H1 (cell line): ENCODE measurements at regions of chr1 and their contacts with region 1.

Region 1: GRCh38 chr1:19485362-19486187 is at the start of gene CAPZB:
- DNase-seq: peak in 1 of 2 experiments; percentile 90
- H3K4me3 ChIP-seq: peak within 1 kb of the TSS; percentile 83 to 99 (median 94)
- H3K27ac ChIP-seq: peak within 1 kb of the TSS; percentile 92
- H3K4me1 ChIP-seq: peaks cover 19 to 41% (median 29%) of the 10 kb centered on the region in 4 experiments
- H3K27me3 ChIP-seq: no peaks in the 10 kb centered on the region
- CTCF ChIP-seq: no peak
- EP300 ChIP-seq: no peak
- POLR2A ChIP-seq: peak; percentile 79 to 85
- RAD21 ChIP-seq: 0 out of 4 replicates have a peak, but pooled peaks of 1 of the 2 experiments have one; percentile 1
- total RNA-seq, gene CAPZB: 371 TPM in 2 replicates

Region 2: DNA sequence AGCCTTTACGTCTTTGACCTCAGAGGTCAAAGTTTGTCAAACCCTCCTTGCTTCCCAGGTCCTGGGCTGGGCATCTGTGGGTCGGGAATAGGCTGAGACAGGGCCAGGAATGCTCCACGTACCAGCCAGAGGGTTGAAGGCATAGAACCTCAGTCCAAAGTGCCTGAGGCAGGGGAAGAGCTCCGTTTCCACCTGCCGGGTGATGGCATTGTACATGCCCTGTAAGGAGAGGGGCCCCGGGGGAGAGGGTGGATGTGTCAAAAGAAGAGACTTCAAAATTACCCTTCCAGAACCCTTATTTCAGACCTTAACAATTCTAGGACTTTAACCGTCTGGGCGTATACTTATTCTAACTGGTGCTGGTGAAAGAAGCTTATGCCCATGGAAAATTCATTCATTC is 200.7 kb before region 1 on chr1:
- CTCF ChIA-PET with region 1: no interaction called
- POLR2A ChIA-PET with region 1: no interaction called
- DNase-seq: no peak
- H3K4me3 ChIP-seq: no peak overlapping the region
- H3K27ac ChIP-seq: no peak overlapping the region
- H3K4me1 ChIP-seq: no peaks in the 10 kb centered on the region
- H3K27me3 ChIP-seq: peaks cover 8 to 24% (median 20%) of the 10 kb centered on the region in 4 experiments
- CTCF ChIP-seq: no peak
- EP300 ChIP-seq: no peak
- POLR2A ChIP-seq: no peak
- RAD21 ChIP-seq: no peak

Region 3: DNA sequence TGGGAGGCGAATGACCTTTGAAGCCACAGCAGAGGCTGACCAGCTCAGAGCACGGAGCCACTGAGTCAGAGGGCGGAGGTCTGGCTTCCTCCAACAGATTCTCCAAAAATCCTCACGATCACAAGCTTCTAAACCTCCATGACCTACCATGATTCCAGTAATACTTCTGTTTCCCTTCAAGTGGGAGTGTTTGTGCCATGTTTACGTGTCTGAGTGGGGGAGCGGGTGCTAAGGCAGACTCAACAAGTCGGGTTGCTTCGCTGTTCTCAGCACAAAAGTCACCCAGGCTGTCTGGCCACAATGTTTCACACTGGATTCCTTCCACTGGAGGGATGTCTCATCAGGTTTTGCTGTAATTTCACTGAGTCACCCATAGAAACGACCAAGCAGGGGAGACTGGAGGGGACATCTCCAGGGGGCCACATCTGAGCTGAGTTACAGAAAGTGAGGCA is 87.2 kb before region 1 on chr1:
- CTCF ChIA-PET with region 1: interaction called, 12 read pairs
- POLR2A ChIA-PET with region 1: no interaction called
- DNase-seq: no peak
- H3K4me3 ChIP-seq: no peak overlapping the region
- H3K27ac ChIP-seq: no peak overlapping the region
- H3K4me1 ChIP-seq: peaks cover 18 to 30% (median 26%) of the 10 kb centered on the region in 4 experiments
- H3K27me3 ChIP-seq: no peaks in the 10 kb centered on the region
- CTCF ChIP-seq: no peak
- EP300 ChIP-seq: no peak
- POLR2A ChIP-seq: no peak
- RAD21 ChIP-seq: no peak

Region 4: DNA sequence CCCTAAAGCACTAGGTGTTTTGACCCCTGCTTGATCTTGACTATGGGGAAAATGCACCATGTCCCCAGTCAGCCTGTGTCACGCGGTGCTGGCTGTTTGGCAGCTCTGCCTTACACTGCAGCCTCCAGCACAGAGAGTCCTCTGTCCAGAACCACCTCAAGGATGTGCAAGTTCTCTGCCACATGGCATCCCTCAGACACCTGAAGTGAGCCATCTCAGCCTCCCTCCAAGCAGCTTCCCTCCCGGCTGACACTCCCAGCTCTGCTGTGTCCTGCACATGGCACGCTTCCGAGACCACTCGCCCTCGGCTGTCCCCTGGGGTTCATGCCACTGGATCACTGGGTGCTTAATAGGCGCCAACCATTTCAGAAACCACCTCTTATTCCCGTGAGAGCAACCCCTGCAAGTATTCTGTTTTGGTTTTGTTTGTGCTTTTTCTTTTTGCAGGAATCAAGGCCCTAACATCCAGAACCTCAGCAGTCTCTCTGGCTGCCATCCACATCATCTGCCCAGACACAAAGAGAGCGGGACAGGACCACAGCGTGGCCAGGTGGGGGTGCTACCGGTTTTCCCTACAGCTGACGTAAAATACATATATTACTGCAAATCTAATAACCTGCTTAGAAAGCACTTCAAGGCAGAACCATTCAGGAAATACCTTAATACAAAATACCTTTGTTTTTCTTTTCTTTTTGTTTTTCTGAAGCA is 46.0 kb before region 1 on chr1:
- CTCF ChIA-PET with region 1: interaction called, 18 read pairs
- POLR2A ChIA-PET with region 1: interaction called, 4 read pairs
- DNase-seq: no peak
- H3K4me3 ChIP-seq: no peak overlapping the region
- H3K27ac ChIP-seq: no peak overlapping the region
- H3K4me1 ChIP-seq: peaks cover 2 to 11% (median 9%) of the 10 kb centered on the region in 4 experiments
- H3K27me3 ChIP-seq: no peaks in the 10 kb centered on the region
- CTCF ChIP-seq: peak; percentile 56 to 68 (median 66)
- EP300 ChIP-seq: no peak
- POLR2A ChIP-seq: no peak
- RAD21 ChIP-seq: peak; percentile 78 to 81

Region 5: GRCh38 chr1:19456968-19457441 is 28.6 kb before region 1 on chr1:
- CTCF ChIA-PET with region 1: interaction called, 13 read pairs
- POLR2A ChIA-PET with region 1: interaction called, 5 read pairs
- DNase-seq: no peak
- H3K4me3 ChIP-seq: 0 out of 8 replicates have a peak overlapping the region, but pooled peaks of 1 of the 4 experiments have one; percentile 1
- H3K27ac ChIP-seq: no peak overlapping the region
- H3K4me1 ChIP-seq: peaks cover 19 to 49% (median 28%) of the 10 kb centered on the region in 4 experiments
- H3K27me3 ChIP-seq: no peaks in the 10 kb centered on the region
- CTCF ChIP-seq: no peak
- EP300 ChIP-seq: no peak
- POLR2A ChIP-seq: no peak
- RAD21 ChIP-seq: no peak

Region 6: GRCh38 chr1:19468397-19468956 is 17.1 kb before region 1 on chr1:
- CTCF ChIA-PET with region 1: interaction called, 53 read pairs
- POLR2A ChIA-PET with region 1: interaction called, 86 read pairs
- DNase-seq: no peak
- H3K4me3 ChIP-seq: no peak overlapping the region
- H3K27ac ChIP-seq: no peak overlapping the region
- H3K4me1 ChIP-seq: peaks cover 9 to 27% (median 22%) of the 10 kb centered on the region in 4 experiments
- H3K27me3 ChIP-seq: no peaks in the 10 kb centered on the region
- CTCF ChIP-seq: no peak
- EP300 ChIP-seq: no peak
- POLR2A ChIP-seq: no peak; a peak in 1 of 3 replicates
- RAD21 ChIP-seq: no peak

Region 7: GRCh38 chr1:19504796-19505692 is 19.5 kb after region 1 on chr1:
- CTCF ChIA-PET with region 1: interaction called, 43 read pairs
- POLR2A ChIA-PET with region 1: interaction called, 5 read pairs
- DNase-seq: no peak
- H3K4me3 ChIP-seq: no peak overlapping the region
- H3K27ac ChIP-seq: no peak overlapping the region
- H3K4me1 ChIP-seq: no peaks in the 10 kb centered on the region
- H3K27me3 ChIP-seq: no peaks in the 10 kb centered on the region
- CTCF ChIP-seq: no peak
- EP300 ChIP-seq: no peak
- POLR2A ChIP-seq: no peak
- RAD21 ChIP-seq: no peak

Region 8: DNA sequence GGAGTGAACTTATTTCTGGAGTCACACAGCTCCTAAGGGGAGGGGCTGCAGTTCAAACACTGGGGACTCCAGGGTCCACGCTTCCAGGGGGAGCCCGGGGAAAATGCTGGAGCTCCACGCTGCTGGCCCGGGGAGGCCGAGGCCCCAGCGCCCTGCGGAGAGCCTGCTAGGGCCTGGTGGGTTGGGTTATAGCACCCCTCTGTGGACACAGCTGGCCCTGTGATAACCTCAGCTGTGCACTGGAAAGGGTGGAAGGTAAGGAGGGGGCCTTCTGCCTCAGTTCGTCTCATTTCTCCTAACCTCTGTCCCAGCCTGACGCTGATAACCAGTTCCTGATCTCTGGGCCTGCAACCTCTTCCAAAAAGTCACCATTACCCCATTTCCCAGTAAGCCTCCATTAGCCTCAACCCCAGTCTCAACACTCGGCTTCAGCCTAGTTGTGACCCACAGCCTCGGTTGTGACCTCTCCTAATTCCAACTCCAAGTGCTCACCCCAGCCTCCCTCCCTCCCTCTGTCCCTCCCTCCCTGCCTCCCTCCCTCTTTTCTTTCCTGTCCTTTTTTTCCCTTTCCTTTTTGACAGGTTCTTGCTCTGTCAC is 165.7 kb after region 1 on chr1:
- CTCF ChIA-PET with region 1: interaction called, 13 read pairs
- POLR2A ChIA-PET with region 1: interaction called, 3 read pairs
- DNase-seq: peak in 1 of 2 experiments; percentile 71
- H3K4me3 ChIP-seq: no peak overlapping the region
- H3K27ac ChIP-seq: no peak overlapping the region
- H3K4me1 ChIP-seq: peaks cover 0 to 3% (median 2%) of the 10 kb centered on the region in 4 experiments; a peak in 4 of 7 replicates
- H3K27me3 ChIP-seq: peaks cover 0 to 4% (median 1%) of the 10 kb centered on the region in 4 experiments; a peak in 4 of 7 replicates
- CTCF ChIP-seq: peak; percentile 78 to 84 (median 78)
- EP300 ChIP-seq: no peak
- POLR2A ChIP-seq: no peak
- RAD21 ChIP-seq: peak; percentile 89 to 91

Region 9: GRCh38 chr1:19682257-19682656 is 196.7 kb after region 1 on chr1:
- CTCF ChIA-PET with region 1: no interaction called
- POLR2A ChIA-PET with region 1: no interaction called
- DNase-seq: no peak
- H3K4me3 ChIP-seq: no peak overlapping the region
- H3K27ac ChIP-seq: no peak overlapping the region
- H3K4me1 ChIP-seq: peaks cover 0 to 14% (median 8%) of the 10 kb centered on the region in 4 experiments; a peak in 4 of 7 replicates
- H3K27me3 ChIP-seq: no peaks in the 10 kb centered on the region
- CTCF ChIP-seq: no peak
- EP300 ChIP-seq: no peak
- POLR2A ChIP-seq: no peak
- RAD21 ChIP-seq: no peak